Colonic mucosa (tissue), 4 donors: ENCODE measurements at regions of chr2 and their contacts with region 1.

Region 1: DNA sequence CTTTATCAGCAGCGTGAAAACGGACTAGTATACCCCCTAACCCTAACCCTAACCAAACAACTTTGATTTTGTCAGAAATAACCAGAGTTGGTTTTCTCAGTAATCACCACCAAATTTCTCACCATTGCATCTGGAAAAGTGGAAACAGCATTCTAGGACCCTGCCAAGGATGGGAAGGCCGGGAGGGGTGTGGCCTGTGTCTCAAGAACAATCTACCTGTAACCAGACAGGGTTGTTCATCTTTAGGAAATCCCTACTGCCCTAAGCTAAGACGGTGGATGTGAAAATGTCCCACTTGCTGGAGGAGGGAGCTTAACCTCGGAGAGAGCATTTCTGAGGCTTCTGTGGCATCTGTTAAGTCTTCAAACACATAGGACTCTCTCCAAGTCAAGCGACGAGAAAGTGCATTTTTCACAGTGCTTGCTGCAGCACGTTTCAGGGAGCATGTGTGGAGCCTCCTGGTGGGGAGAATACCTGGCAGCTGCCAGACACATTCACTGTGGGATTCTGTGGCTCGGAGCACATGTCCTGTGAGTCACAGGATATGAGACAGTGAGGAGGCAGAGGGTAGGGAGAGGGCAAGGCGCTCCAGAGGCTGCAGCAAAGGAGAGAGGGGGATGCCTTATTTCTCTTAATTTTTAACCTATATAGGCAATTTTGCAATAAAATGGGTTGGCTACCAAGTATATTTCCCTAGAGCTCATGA is 207.5 kb downstream of the SPP2 start:
- DNase-seq: peak; percentile 37
- H3K4me3 ChIP-seq: no peak overlapping the region
- H3K27ac ChIP-seq: no peak overlapping the region
- H3K4me1 ChIP-seq: no peaks in the 10 kb centered on the region
- H3K27me3 ChIP-seq: no peaks in the 10 kb centered on the region
- CTCF ChIP-seq: peak; percentile 27

Region 2: DNA sequence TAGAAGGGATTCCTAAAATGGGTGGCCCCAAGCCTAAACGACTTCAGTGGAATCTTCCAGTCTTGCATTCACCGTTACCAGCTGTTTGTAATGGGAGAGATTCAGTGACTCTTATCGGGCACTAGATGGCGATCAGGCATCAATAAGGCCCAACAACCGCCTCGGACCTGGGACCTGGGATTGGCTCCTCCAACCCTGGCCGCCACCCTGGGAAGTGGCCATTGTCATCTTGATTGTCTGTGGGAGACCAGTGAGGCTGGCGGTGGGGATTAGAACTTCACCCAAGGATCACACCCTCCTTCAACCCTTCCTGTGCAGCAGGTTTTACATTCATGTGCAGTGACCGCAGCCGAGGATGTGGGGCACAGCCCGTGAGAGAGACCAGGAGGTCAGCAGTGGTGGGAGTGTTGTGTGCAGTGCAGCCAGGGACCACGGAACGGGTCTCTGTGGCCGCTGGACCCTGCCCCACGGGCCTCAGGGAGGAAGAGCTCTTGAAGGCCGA is 122.2 kb before region 1 on chr2:
- intact Hi-C with region 1: loop called (anchors 2 kb)
- DNase-seq: peak; percentile 52
- H3K4me3 ChIP-seq: no peak overlapping the region
- H3K27ac ChIP-seq: no peak overlapping the region
- H3K4me1 ChIP-seq: no peaks in the 10 kb centered on the region
- H3K27me3 ChIP-seq: peaks cover 3% of the 10 kb centered on the region
- CTCF ChIP-seq: peak; percentile 70